ENCODE measurements at regions of chr14 and their contacts with region 1.

Region 1: GRCh38 chr14:65102441-65103149 is at the start of gene MAX:
- DNase-seq: peak; percentile 88 to 100 (median 99)
- ATAC-seq: peak; percentile 95
- H3K4me3 ChIP-seq: peak within 1 kb of the TSS; percentile 96
- H3K4me3 Mint-ChIP-seq: peak within 1 kb of the TSS; percentile 87 to 97 (median 91)
- H3K27ac ChIP-seq: peak within 1 kb of the TSS; percentile 100
- H3K27ac Mint-ChIP-seq: peak within 1 kb of the TSS; percentile 91 to 99 (median 94)
- H3K4me1 ChIP-seq: peaks cover 17 to 34% of the 10 kb centered on the region in 2 donors
- H3K4me1 Mint-ChIP-seq: peaks cover 28 to 43% (median 42%) of the 10 kb centered on the region in 7 donors
- H3K27me3 ChIP-seq: no peaks in the 10 kb centered on the region
- H3K27me3 Mint-ChIP-seq: peaks cover 0 to 12% (median 0%) of the 10 kb centered on the region in 5 donors
- total RNA-seq, gene MAX: 164 to 236 (median 202) TPM

Region 2: DNA sequence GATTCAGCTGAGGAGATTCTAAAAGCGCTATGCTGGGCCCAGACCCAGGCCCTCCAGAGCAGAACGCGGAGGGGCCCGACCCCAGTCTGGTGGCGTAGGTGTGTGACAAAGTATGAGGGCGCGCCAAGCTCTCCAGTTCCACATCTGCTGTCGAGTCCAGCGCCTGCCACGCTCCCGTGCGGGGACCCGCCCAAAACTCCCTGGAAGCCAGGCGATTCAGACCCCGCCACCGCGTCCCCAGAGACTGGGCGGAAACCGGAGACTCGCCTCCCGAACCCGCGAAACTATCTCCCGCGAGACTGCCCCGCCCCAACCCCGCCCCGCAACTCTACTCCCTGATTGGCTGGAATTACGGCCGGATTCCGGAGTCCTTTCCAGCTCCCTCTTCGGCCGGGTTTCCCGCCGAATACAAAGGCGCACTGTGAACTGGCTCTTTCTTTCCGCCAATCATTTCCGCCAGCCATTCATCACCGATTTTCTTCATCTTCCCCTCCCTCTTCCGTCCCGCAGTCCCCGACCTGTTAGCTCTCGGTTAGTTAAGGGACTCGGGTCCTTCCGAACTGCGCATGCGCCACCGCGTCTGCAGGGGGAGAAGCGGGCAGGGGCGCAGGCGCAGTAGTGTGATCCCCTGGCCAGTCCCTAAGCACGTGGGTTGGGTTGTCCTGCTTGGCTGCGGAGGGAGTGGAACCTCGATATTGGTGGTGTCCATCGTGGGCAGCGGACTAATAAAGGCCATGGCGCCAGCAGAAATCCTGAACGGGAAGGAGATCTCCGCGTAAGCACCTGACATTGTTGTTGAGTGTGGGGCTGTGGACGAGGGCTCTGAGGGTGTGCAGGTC is 714.7 kb before region 1 on chr14 and contains the start of gene MTHFD1:
- CTCF ChIA-PET with region 1: no interaction called
- POLR2A ChIA-PET with region 1: no interaction called
- intact Hi-C with region 1: loop called (anchors 1 to 5 kb)
- DNase-seq: peak; percentile 93 to 97 (median 96)
- ATAC-seq: peak; percentile 90
- H3K4me3 ChIP-seq: peak within 1 kb of the TSS; percentile 89
- H3K4me3 Mint-ChIP-seq: peak within 1 kb of the TSS; percentile 92 to 99 (median 96)
- H3K27ac ChIP-seq: peak within 1 kb of the TSS; percentile 79
- H3K27ac Mint-ChIP-seq: peak within 1 kb of the TSS; percentile 90 to 99 (median 95)
- H3K4me1 ChIP-seq: peaks cover 11 to 17% of the 10 kb centered on the region in 2 donors
- H3K4me1 Mint-ChIP-seq: peaks cover 18 to 49% (median 41%) of the 10 kb centered on the region in 7 donors
- H3K27me3 ChIP-seq: no peaks in the 10 kb centered on the region
- H3K27me3 Mint-ChIP-seq: peaks cover 0 to 4% (median 0%) of the 10 kb centered on the region in 5 donors
- total RNA-seq, gene MTHFD1: 28.0 to 189 (median 30.2) TPM

Region 3: DNA sequence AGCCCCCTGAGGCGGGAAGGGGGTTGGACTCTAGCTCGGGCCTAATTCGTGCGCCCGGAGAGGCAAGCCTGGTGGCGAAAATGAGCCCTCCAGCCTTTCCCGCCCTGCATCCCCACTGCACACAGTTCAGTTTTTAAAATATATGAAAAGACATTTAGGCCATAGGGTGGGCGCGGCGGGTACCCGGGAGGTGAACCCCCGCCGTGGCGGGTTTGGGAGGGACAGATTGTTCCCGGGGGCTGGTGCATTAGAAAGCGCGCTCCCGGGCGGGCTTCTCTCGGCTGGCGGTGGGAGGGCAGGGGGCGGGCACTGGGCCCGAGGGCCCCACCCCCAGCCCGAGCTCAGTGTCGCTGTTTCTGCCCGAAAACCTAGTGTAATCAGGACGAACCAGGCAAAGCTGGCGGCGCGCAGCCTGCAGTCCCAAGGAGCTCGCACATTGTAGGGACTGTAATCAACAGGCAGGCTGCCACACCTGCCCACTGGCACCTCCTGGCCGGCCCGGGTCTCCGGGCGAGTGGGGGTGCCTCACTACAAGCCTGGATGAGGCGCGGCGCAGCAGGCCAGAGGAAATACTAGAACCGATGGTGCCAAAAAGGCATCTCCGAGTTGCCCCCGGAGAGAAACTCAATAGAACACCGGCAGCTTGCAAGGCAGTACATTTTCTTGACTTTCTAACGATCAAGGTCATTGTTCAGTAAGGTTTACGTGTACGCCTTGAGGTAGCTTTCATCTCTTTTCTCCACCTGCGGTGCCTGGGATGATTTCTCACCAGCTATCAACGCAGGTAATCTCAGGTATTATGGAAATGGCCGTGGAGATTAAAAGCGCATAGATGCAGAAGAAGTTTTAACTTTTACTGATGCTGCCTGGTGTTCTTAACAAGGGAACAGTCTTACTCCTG is 222.1 kb before region 1 on chr14:
- CTCF ChIA-PET with region 1: no interaction called
- POLR2A ChIA-PET with region 1: no interaction called
- intact Hi-C with region 1: loop called in 1 of 2 experiments (anchors 1 kb)
- DNase-seq: peak; percentile 29 to 68 (median 54)
- ATAC-seq: peak; percentile 85
- H3K4me3 ChIP-seq: peak overlapping the region; percentile 67
- H3K4me3 Mint-ChIP-seq: peak overlapping the region; percentile 85 to 92 (median 88)
- H3K27ac ChIP-seq: peak overlapping the region; percentile 20
- H3K27ac Mint-ChIP-seq: peak overlapping the region in 4 of 9 donors; percentile 14 to 59 (median 36)
- H3K4me1 ChIP-seq: peaks cover 0 to 4% of the 10 kb centered on the region in 2 donors
- H3K4me1 Mint-ChIP-seq: peaks cover 0 to 11% (median 8%) of the 10 kb centered on the region in 7 donors
- H3K27me3 ChIP-seq: peaks cover 0 to 7% of the 10 kb centered on the region in 2 donors
- H3K27me3 Mint-ChIP-seq: peaks cover 13 to 81% (median 19%) of the 10 kb centered on the region in 5 donors

Region 4: GRCh38 chr14:64914237-64914971 is 188.2 kb before region 1 on chr14 and contains the start of gene CHURC1:
- CTCF ChIA-PET with region 1: no interaction called
- POLR2A ChIA-PET with region 1: interaction called, 5 read pairs
- intact Hi-C with region 1: loop called (anchors 1 kb)
- DNase-seq: peak; percentile 83 to 99 (median 94)
- ATAC-seq: peak; percentile 98
- H3K4me3 ChIP-seq: peak within 1 kb of the TSS; percentile 96
- H3K4me3 Mint-ChIP-seq: peak within 1 kb of the TSS; percentile 87 to 97 (median 92)
- H3K27ac ChIP-seq: peak within 1 kb of the TSS; percentile 99
- H3K27ac Mint-ChIP-seq: peak within 1 kb of the TSS; percentile 93 to 99 (median 97)
- H3K4me1 ChIP-seq: peaks cover 33 to 37% of the 10 kb centered on the region in 2 donors
- H3K4me1 Mint-ChIP-seq: peaks cover 42 to 60% (median 51%) of the 10 kb centered on the region in 7 donors
- H3K27me3 ChIP-seq: no peaks in the 10 kb centered on the region
- H3K27me3 Mint-ChIP-seq: peaks cover 0 to 13% (median 0%) of the 10 kb centered on the region in 5 donors
- total RNA-seq, gene CHURC1: 71.9 to 117 (median 80.7) TPM

Region 5: DNA sequence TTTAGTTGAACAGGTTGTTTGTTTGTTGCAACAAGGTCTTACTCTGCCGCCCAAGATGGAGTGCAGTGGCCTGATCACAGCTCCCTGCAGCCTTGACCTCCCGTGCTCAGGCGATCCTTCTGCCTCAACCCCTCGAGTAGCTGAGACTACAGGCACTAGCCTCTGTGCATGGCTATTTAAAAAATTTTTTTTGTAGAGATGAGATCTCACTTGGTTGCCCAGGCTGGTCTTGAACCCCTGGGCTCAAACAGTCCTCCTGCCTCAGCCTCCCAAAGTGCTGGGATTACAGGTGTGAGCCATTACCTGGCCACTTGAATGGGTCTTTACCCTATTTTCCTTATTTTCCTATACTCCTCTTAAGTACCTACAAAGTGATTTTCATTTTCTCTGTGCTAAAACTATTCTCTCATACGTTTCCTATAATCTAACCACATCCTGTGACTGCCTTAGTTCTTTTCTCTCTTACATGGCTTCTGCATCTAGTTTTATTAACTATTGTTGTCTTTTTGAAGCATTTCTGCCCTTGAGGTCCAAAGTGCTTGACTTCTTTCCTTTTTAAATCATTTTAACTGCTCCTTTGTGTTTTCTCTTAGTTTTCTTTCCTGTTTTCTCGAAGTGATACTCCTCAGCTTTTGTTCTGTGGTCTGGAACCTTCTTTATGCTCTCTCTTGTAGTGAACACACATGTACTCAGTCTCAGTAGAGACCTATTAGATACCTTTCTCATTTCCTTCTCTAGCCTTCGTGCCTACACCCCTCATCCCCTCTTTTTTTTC is 174.2 kb before region 1 on chr14:
- CTCF ChIA-PET with region 1: no interaction called
- POLR2A ChIA-PET with region 1: no interaction called
- intact Hi-C with region 1: loop called (anchors 5 kb)
- DNase-seq: peak in 7 of 9 donors; percentile 28 to 81 (median 76)
- ATAC-seq: peak; percentile 84
- H3K4me3 ChIP-seq: peak overlapping the region; percentile 16
- H3K4me3 Mint-ChIP-seq: no peak overlapping the region
- H3K27ac ChIP-seq: peak overlapping the region; percentile 67
- H3K27ac Mint-ChIP-seq: no peak overlapping the region
- H3K4me1 ChIP-seq: peaks cover 40 to 68% of the 10 kb centered on the region in 2 donors
- H3K4me1 Mint-ChIP-seq: peaks cover 17 to 36% (median 29%) of the 10 kb centered on the region in 7 donors
- H3K27me3 ChIP-seq: no peaks in the 10 kb centered on the region
- H3K27me3 Mint-ChIP-seq: no peaks in the 10 kb centered on the region

Region 6: GRCh38 chr14:65206448-65207096 is 104.0 kb after region 1 on chr14:
- CTCF ChIA-PET with region 1: no interaction called
- POLR2A ChIA-PET with region 1: no interaction called
- intact Hi-C with region 1: loop called (anchors 5 kb)
- DNase-seq: peak in 1 of 9 donors; percentile 36
- ATAC-seq: peak; percentile 73
- H3K4me3 ChIP-seq: no peak overlapping the region
- H3K4me3 Mint-ChIP-seq: peak overlapping the region in 9 of 10 donors; percentile 41 to 85 (median 70)
- H3K27ac ChIP-seq: peak overlapping the region; percentile 14
- H3K27ac Mint-ChIP-seq: peak overlapping the region; percentile 81 to 93 (median 83)
- H3K4me1 ChIP-seq: peaks cover 40 to 45% of the 10 kb centered on the region in 2 donors
- H3K4me1 Mint-ChIP-seq: peaks cover 35 to 69% (median 58%) of the 10 kb centered on the region in 7 donors
- H3K27me3 ChIP-seq: no peaks in the 10 kb centered on the region
- H3K27me3 Mint-ChIP-seq: no peaks in the 10 kb centered on the region

Region 7: GRCh38 chr14:66507722-66508546 is 1405.3 kb after region 1 on chr14 and contains the start of gene GPHN:
- CTCF ChIA-PET with region 1: no interaction called
- POLR2A ChIA-PET with region 1: interaction called, 3 read pairs
- intact Hi-C with region 1: loop called in 1 of 2 experiments (anchors 2 kb)
- DNase-seq: peak; percentile 62 to 87 (median 82)
- ATAC-seq: peak; percentile 93
- H3K4me3 ChIP-seq: peak within 1 kb of the TSS; percentile 78
- H3K4me3 Mint-ChIP-seq: peak within 1 kb of the TSS; percentile 94 to 100 (median 99)
- H3K27ac ChIP-seq: peak within 1 kb of the TSS; percentile 70
- H3K27ac Mint-ChIP-seq: peak within 1 kb of the TSS; percentile 71 to 96 (median 91)
- H3K4me1 ChIP-seq: peaks cover 6 to 7% of the 10 kb centered on the region in 2 donors
- H3K4me1 Mint-ChIP-seq: peaks cover 16 to 42% (median 34%) of the 10 kb centered on the region in 7 donors
- H3K27me3 ChIP-seq: no peaks in the 10 kb centered on the region
- H3K27me3 Mint-ChIP-seq: peaks cover 0 to 29% (median 0%) of the 10 kb centered on the region in 5 donors
- total RNA-seq, gene GPHN: 11.8 to 28.1 (median 14.8) TPM

Measured in naive thymus-derived CD4-positive, alpha-beta T cell (primary cell).